IMR-90 (cell line): ENCODE measurements at regions of chr2 and their contacts with region 1.

Region 1: DNA sequence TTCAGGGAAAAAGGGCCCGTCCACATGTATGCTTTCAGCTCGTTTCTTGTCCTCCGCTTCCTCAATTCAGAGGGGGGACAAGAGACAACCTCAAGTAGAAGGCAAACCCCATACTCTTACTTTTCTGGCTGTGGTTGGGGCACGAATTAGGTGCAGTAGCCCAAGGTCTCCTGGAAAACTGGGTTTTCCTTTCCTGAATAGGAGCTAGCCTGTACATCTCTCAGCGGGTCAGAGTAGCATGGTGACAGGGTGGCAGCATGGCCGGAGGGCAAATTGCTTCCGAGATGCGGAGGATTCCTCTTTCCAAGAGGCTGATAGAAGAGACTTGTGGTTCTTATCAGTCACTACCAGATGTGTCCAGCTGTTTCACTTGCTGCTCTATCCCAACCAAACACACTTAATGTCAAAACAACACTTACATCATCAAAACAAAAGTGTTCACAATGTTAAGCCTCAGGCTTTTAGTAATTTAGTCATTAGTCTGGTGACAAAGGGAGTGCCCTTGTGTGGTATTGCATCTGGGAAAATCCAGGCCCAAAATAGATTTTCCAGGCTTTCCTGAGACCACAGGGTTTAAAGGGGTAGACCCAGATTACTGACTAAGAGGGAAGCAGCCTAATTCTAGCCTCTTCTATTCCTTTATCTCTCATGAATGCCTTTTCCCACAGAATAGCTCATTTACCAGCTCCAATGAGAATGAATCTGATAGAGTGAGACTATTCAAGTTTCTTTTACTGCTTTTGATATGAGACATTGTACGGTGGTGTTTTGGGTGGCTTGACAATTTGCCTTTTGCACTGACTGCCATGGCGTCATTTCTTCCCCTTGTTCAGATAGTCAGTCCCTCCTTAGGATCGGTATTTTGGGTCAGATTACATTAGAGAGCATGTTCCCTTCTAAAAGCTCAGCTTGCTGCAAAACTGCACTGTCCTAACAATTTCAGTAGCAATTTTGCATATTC is 162.0 kb downstream of the LTBP1 start:
- DNase-seq: peak; percentile 90
- ATAC-seq: peak; percentile 56
- H3K4me3 ChIP-seq: no peak overlapping the region
- H3K27ac ChIP-seq: peak overlapping the region; percentile 76
- H3K4me1 ChIP-seq: peaks cover 33% of the 10 kb centered on the region
- H3K27me3 ChIP-seq: no peaks in the 10 kb centered on the region
- CTCF ChIP-seq: no peak
- POLR2A ChIP-seq: no peak
- RAD21 ChIP-seq: no peak

Region 2: GRCh38 chr2:33086400-33087015 is 22.3 kb before region 1 on chr2:
- CTCF ChIA-PET with region 1: no interaction called
- POLR2A ChIA-PET with region 1: no interaction called
- dilution Hi-C with region 1: no loop called
- in situ Hi-C with region 1: no loop called
- intact Hi-C with region 1: no loop called
- DNase-seq: peak; percentile 67
- ATAC-seq: peak; percentile 54
- H3K4me3 ChIP-seq: no peak overlapping the region
- H3K27ac ChIP-seq: no peak overlapping the region
- H3K4me1 ChIP-seq: peaks cover 10% of the 10 kb centered on the region
- H3K27me3 ChIP-seq: no peaks in the 10 kb centered on the region
- CTCF ChIP-seq: 0 out of 2 replicates have a peak, but pooled peaks have one; percentile 16
- POLR2A ChIP-seq: no peak
- RAD21 ChIP-seq: no peak; the same call in 1 of the 2 replicates

Region 3: DNA sequence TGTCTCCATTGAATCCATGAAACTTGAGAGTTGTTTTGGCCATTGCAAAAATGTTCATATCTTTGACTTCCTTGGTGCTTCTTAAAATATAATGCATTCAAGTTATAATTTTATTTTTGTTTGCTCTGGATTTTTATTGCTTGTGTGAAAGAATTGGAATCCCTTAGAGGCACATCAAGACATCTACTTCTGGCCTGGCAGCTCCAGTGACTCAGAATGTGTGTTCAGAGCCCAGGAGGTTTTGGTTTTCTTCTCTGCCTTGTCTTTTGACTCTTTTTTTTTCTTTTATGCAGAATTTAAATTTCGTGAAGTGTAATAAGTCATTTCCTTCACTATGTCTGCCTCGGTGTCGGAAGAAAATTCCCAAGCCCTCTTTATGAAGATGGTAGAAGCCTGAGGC is 18.2 kb after region 1 on chr2:
- CTCF ChIA-PET with region 1: no interaction called
- POLR2A ChIA-PET with region 1: no interaction called
- dilution Hi-C with region 1: no loop called
- in situ Hi-C with region 1: no loop called
- intact Hi-C with region 1: no loop called
- DNase-seq: peak; percentile 65
- ATAC-seq: peak; percentile 40; the same call in 1 of the 2 replicates
- H3K4me3 ChIP-seq: no peak overlapping the region
- H3K27ac ChIP-seq: no peak overlapping the region
- H3K4me1 ChIP-seq: peaks cover 16% of the 10 kb centered on the region
- H3K27me3 ChIP-seq: no peaks in the 10 kb centered on the region
- CTCF ChIP-seq: no peak
- POLR2A ChIP-seq: no peak
- RAD21 ChIP-seq: no peak

Region 4: GRCh38 chr2:33180915-33181314 is 72.2 kb after region 1 on chr2:
- CTCF ChIA-PET with region 1: no interaction called
- POLR2A ChIA-PET with region 1: no interaction called
- dilution Hi-C with region 1: no loop called
- in situ Hi-C with region 1: no loop called
- intact Hi-C with region 1: no loop called
- DNase-seq: no peak
- ATAC-seq: no peak
- H3K4me3 ChIP-seq: no peak overlapping the region
- H3K27ac ChIP-seq: no peak overlapping the region
- H3K4me1 ChIP-seq: peaks cover 11% of the 10 kb centered on the region
- H3K27me3 ChIP-seq: no peaks in the 10 kb centered on the region
- CTCF ChIP-seq: no peak
- POLR2A ChIP-seq: no peak
- RAD21 ChIP-seq: no peak

Region 5: DNA sequence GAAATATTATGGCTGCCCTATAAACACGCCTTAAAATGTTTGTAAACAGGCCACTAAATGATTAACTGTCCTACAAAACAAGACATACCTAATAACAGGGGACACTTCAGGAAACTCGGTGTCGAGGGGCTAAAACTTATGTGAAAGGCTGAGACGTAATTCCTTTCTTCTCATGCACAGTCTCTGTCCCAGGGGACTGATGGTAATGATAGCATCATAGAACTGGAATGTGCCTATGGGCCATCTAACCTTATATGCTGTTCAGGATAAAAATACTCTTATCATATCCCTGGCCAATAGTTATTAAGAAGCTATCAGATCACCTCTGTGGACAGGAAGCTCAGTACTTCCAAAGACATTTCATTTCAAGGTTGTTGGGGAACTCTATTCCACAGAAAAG is 115.1 kb after region 1 on chr2:
- CTCF ChIA-PET with region 1: no interaction called
- POLR2A ChIA-PET with region 1: no interaction called
- dilution Hi-C with region 1: no loop called
- in situ Hi-C with region 1: no loop called
- intact Hi-C with region 1: no loop called
- DNase-seq: no peak
- ATAC-seq: peak; percentile 21; the same call in 1 of the 2 replicates
- H3K4me3 ChIP-seq: no peak overlapping the region
- H3K27ac ChIP-seq: no peak overlapping the region
- H3K4me1 ChIP-seq: peaks cover 12% of the 10 kb centered on the region
- H3K27me3 ChIP-seq: no peaks in the 10 kb centered on the region
- CTCF ChIP-seq: no peak
- POLR2A ChIP-seq: no peak
- RAD21 ChIP-seq: no peak

Region 6: DNA sequence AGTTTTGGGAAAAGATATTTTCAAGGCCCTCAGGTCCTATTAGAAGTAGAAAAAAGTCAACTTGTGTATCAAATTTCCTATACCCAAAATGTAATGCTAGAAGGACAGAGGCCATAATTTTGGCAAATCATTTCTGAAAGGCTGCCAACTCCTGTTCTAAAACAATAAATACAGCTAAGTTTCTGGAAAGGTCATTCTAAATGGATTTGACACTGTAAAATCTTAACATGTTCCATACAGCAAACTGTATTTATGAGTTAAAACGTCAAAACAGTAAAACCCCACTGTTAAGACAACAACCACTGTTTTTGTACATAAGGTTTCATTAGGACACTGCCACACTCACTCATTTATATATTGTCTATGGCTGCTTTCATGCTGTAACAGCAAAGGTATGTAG is 480.7 kb after region 1 on chr2:
- CTCF ChIA-PET with region 1: no interaction called
- POLR2A ChIA-PET with region 1: no interaction called
- dilution Hi-C with region 1: no loop called
- in situ Hi-C with region 1: no loop called
- intact Hi-C with region 1: loop called (anchors 5 kb)
- DNase-seq: peak; percentile 19
- ATAC-seq: no peak; the same call in 1 of the 2 replicates
- H3K4me3 ChIP-seq: no peak overlapping the region
- H3K27ac ChIP-seq: no peak overlapping the region
- H3K4me1 ChIP-seq: peaks cover 4% of the 10 kb centered on the region; the same call in 1 of the 2 replicates
- H3K27me3 ChIP-seq: no peaks in the 10 kb centered on the region
- CTCF ChIP-seq: no peak
- POLR2A ChIP-seq: no peak
- RAD21 ChIP-seq: no peak